Activated CD8-positive, alpha-beta T cell treated with anti-CD3 and anti-CD28 coated beads for 36 hours (primary cell): ENCODE measurements at regions of chr9 and their contacts with region 1.

Region 1: DNA sequence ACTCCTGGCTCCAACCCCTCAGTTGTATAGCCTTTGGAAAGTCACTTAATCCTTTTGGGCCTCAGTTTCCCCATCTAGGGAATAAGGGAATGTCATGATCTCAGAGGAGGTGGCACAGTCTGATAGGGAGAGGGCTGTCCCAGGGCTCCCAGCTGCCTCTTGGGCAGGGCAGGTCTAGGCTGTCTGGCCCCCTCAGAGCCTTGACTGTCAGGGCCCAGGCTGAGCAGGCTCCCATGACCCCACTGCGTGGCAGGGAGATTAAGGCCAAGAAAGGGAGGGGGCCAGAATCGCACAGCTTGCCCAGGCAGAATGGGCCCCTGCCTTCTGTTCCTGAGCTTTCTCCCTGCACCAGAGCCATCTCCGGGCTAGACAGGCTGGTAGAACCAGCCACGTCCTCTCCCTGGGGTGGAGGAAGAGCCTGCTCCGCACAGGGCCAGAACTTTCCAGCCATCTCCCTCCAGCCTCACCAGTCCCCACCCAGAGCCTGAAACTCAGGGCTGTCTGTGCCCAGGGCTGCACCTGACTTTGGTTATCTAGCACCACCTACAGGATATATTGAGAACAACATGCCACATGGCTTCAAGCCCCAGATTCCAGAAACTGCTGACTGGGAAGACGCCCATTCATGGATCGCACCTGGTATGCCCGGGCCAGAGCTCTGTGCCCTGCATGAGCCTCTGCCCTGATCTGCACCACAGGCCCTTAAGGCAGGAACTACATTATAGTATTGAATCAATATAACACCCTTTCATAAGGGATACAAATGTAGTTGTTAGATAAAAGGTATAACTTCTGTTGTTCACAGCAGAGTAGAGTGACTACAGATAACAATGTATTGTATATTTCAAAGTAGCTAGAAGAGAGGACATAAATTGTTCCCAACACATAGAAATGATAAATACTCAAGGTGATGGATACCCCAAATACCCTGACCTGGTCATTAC is 32.0 kb downstream of the NAIF1 start:
- DNase-seq: peak; percentile 76
- ATAC-seq: peak; percentile 64
- H3K4me3 Mint-ChIP-seq: no peak overlapping the region
- H3K27ac Mint-ChIP-seq: peak overlapping the region; percentile 74
- H3K4me1 Mint-ChIP-seq: peaks cover 34% of the 10 kb centered on the region
- H3K27me3 Mint-ChIP-seq: no peaks in the 10 kb centered on the region
- CTCF ChIP-seq: peak; percentile 94

Region 2: DNA sequence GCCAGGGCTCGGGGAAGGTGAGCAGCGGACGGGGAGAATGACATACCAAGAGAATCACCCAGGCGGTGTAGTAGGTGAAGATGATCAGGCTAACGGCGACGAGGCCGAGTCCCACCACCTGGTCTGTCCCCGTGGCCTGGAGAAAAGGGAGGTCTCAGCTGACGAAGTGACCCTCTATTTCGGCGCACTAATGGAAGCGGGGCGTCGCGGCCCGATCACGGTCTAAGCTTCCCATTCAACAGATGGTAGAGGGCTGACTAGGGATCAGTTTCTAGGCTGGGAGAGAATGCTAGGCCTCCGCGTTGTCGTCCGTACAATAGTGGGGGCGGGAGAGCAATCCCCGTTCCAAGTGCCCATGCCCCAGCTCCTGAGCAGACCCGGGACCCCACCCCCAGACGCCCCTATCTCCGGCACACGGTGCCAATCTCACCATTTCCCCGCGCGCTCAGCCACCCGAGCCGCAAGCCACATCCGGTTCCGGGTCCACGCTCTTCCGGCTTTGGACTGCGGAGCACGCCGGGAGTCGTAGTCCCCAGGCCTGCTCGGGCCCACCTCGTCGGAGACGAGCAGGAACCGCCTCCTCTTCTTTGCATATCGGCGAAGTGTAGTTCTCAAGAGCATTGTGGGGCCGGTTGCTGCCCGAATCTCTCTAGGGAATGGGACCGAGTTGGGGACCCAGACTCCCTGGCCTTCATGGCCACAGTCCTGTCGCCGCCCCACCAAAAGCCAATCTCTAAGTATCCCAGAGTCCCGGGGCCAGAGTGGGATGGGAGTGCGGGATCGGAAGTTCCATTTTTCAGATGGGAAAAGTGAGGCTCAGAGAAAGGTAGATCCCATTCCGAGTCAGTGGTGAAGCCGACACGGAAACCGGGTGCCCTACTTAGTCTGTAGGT is 97.5 kb before region 1 on chr9 and contains the start of gene DPM2:
- CTCF ChIA-PET with region 1: interaction called, 631 read pairs
- POLR2A ChIA-PET with region 1: interaction called, 7 read pairs
- intact Hi-C with region 1: loop called (anchors 5 kb)
- DNase-seq: peak; percentile 91
- ATAC-seq: peak; percentile 93
- H3K4me3 Mint-ChIP-seq: peak within 1 kb of the TSS; percentile 93
- H3K27ac Mint-ChIP-seq: peak within 1 kb of the TSS; percentile 95
- H3K4me1 Mint-ChIP-seq: peaks cover 36% of the 10 kb centered on the region
- H3K27me3 Mint-ChIP-seq: no peaks in the 10 kb centered on the region
- CTCF ChIP-seq: no peak
- total RNA-seq, gene DPM2: 41.3 to 43.9 TPM

Region 3: DNA sequence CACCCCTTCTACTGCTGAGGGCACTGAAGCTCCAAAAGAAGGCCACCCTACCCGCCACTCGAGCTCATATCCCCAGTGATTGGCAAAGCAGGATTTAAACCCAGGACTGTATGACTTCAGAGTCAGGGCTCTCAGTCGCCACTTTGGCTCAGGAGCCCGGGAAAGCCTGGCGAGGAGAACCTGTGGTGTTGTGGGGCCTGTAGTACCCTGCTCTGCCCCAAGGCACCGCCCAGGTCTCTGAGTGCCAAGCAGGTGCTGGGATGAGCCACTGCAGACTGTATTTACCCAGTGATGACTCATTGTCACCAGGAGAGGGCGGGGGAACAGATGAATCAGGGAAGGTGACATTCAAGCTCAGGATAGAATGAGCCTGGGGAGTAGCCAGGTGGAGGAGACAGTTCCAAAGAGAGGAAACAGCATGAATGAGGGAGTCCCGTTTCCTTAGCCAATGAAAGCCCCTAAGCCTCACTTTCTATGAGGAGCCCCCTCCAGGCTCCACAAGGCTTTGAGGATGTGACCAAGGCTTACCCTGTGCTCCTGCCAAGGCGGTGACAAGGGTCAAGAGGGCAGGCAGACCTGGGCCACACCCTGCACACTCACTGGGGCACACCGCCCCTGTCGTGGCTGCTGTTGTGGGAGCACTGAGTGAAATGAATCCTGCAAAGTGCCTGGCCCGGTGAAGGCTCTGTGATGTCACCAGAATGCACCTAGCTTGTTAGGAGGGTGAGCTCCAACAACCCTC is 79.6 kb before region 1 on chr9:
- CTCF ChIA-PET with region 1: interaction called, 631 read pairs
- POLR2A ChIA-PET with region 1: interaction called, 18 read pairs
- intact Hi-C with region 1: no loop called
- DNase-seq: peak; percentile 96
- ATAC-seq: peak; percentile 90
- H3K4me3 Mint-ChIP-seq: peak overlapping the region; percentile 46
- H3K27ac Mint-ChIP-seq: peak overlapping the region; percentile 88
- H3K4me1 Mint-ChIP-seq: peaks cover 80% of the 10 kb centered on the region
- H3K27me3 Mint-ChIP-seq: no peaks in the 10 kb centered on the region
- CTCF ChIP-seq: peak; percentile 68

Region 4: GRCh38 chr9:127980706-127981558 is 54.2 kb before region 1 on chr9 and contains the start of gene EEIG1:
- CTCF ChIA-PET with region 1: interaction called, 141 read pairs
- POLR2A ChIA-PET with region 1: interaction called, 21 read pairs
- intact Hi-C with region 1: no loop called
- DNase-seq: peak; percentile 97
- ATAC-seq: peak; percentile 87
- H3K4me3 Mint-ChIP-seq: peak within 1 kb of the TSS; percentile 97
- H3K27ac Mint-ChIP-seq: peak within 1 kb of the TSS; percentile 97
- H3K4me1 Mint-ChIP-seq: peaks cover 46% of the 10 kb centered on the region
- H3K27me3 Mint-ChIP-seq: no peaks in the 10 kb centered on the region
- CTCF ChIP-seq: no peak
- total RNA-seq, gene EEIG1: 79.7 to 81.5 TPM

Region 5: GRCh38 chr9:128020692-128021091 is 14.4 kb before region 1 on chr9:
- CTCF ChIA-PET with region 1: interaction called, 27 read pairs
- POLR2A ChIA-PET with region 1: interaction called, 4 read pairs
- intact Hi-C with region 1: no loop called
- DNase-seq: no peak
- ATAC-seq: no peak
- H3K4me3 Mint-ChIP-seq: no peak overlapping the region
- H3K27ac Mint-ChIP-seq: peak overlapping the region; percentile 8
- H3K4me1 Mint-ChIP-seq: peaks cover 52% of the 10 kb centered on the region
- H3K27me3 Mint-ChIP-seq: no peaks in the 10 kb centered on the region
- CTCF ChIP-seq: peak; percentile 19

Region 6: GRCh38 chr9:128067876-128068613 is 33.0 kb after region 1 on chr9 and contains the start of gene SLC25A25:
- CTCF ChIA-PET with region 1: interaction called, 32 read pairs
- POLR2A ChIA-PET with region 1: interaction called, 4 read pairs
- intact Hi-C with region 1: no loop called
- DNase-seq: peak; percentile 100
- ATAC-seq: peak; percentile 89
- H3K4me3 Mint-ChIP-seq: peak within 1 kb of the TSS; percentile 96
- H3K27ac Mint-ChIP-seq: peak within 1 kb of the TSS; percentile 87
- H3K4me1 Mint-ChIP-seq: peaks cover 50% of the 10 kb centered on the region
- H3K27me3 Mint-ChIP-seq: no peaks in the 10 kb centered on the region
- CTCF ChIP-seq: no peak
- total RNA-seq, gene SLC25A25: 12.9 to 14.6 TPM

Region 7: GRCh38 chr9:128103589-128103962 is 68.5 kb after region 1 on chr9:
- CTCF ChIA-PET with region 1: interaction called, 10 read pairs
- POLR2A ChIA-PET with region 1: no interaction called
- intact Hi-C with region 1: no loop called
- DNase-seq: peak; percentile 68
- ATAC-seq: peak; percentile 74
- H3K4me3 Mint-ChIP-seq: no peak overlapping the region
- H3K27ac Mint-ChIP-seq: peak overlapping the region; percentile 75
- H3K4me1 Mint-ChIP-seq: peaks cover 49% of the 10 kb centered on the region
- H3K27me3 Mint-ChIP-seq: no peaks in the 10 kb centered on the region
- CTCF ChIP-seq: peak; percentile 53

Region 8: DNA sequence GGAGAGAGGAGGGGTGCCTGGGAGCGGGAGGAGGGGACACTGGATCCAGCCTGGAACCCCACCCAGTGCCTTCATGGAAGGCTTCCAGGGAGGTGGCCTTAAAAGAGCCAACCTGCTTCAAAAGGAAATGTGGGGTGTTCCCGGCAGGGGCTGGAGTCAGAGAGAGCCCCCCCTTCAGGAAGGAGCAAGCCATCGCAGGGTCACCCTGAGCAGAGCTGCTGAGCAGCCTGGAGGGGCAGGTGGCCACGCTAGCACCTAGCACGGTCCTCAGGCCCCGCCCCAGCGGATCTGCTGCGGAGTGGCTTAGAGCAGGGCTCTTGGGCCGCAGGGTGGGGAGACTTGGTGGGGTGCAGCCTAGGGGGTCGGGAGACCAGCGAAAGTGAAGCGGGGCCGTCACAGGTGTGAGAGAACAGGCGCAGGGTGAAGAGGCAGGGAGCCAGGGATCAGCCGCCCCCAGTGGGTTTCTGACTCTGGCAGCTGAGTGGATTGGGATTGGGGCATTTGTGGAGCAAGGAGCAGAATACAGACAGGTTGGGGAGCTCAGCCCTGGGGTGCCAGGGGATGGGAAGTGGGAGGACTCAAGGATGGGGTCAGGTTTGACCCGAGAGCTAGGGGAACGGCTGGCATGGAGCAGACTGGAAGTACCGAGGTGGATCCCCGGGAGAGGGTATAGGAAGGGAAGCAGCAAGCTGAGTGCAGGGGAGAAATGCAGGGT is 115.7 kb after region 1 on chr9:
- CTCF ChIA-PET with region 1: no interaction called
- POLR2A ChIA-PET with region 1: no interaction called
- intact Hi-C with region 1: no loop called
- DNase-seq: peak; percentile 25
- ATAC-seq: peak; percentile 89
- H3K4me3 Mint-ChIP-seq: no peak overlapping the region
- H3K27ac Mint-ChIP-seq: no peak overlapping the region
- H3K4me1 Mint-ChIP-seq: no peaks in the 10 kb centered on the region
- H3K27me3 Mint-ChIP-seq: no peaks in the 10 kb centered on the region
- CTCF ChIP-seq: peak; percentile 45